ENCODE measurements at regions of chr1 and their contacts with region 1.

Region 1: GRCh38 chr1:66954208-66954607 is 29.4 kb downstream of the MIER1 start:
- DNase-seq: no peak
- H3K4me3 ChIP-seq: no peak overlapping the region
- H3K27ac ChIP-seq: peak overlapping the region; percentile 27
- H3K4me1 ChIP-seq: peaks cover 12% of the 10 kb centered on the region
- H3K27me3 ChIP-seq: no peaks in the 10 kb centered on the region
- CTCF ChIP-seq: no peak
- POLR2A ChIP-seq: no peak

Region 2: DNA sequence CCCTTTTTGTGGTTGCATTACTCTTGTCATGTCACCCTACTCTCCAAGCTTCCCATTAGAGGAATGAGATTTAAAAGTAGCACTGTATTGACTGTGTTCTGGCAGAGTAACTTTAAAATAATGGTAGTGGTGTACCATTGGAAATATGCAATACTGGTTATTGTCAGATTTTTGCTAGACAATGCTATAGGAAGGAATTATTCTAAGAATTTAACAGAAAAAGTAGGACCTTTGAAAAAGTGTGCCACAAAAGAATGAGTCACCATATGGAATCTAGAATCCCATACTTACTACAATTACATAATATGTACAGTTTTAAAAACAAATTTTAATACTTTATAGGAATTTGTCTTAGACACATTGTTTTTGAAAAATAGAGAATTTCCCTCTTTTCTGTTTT is 15.6 kb before region 1 on chr1:
- CTCF ChIA-PET with region 1: interaction called, 5 read pairs
- POLR2A ChIA-PET with region 1: no interaction called
- dilution Hi-C with region 1: no loop called
- intact Hi-C with region 1: loop called (anchors 1 kb)
- DNase-seq: peak; percentile 50
- H3K4me3 ChIP-seq: no peak overlapping the region
- H3K27ac ChIP-seq: no peak overlapping the region
- H3K4me1 ChIP-seq: peaks cover 25% of the 10 kb centered on the region
- H3K27me3 ChIP-seq: no peaks in the 10 kb centered on the region
- CTCF ChIP-seq: no peak
- POLR2A ChIP-seq: no peak

Region 3: DNA sequence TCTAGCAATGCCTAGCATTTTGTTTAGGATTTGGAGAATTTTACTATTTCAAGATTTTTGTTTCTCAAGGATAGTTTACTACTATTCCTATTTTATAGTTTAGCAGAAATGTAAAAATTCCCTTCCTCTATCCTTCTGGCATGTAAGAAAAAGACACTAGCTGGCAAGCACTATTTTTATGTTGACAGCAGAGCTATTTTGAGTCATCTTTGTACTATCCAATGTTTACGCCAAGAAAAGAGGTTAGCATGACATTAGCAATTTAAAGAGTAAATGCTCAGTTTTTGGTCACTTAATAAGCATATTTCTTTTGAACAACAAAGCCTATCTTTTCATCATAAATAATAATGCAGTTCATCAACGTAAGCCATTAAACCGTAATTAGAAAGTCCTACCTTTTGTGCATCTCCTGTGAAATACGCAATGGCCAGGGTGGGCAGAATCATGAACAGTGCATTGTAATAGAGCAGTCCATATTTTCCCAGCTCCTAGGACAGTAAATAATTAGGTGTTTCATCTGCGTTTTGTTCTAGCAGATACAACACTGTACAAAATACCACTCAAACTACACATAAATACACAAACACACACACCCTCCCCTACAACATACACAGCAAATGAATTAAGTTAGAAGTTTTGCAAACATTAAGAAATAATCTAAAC is 87.8 kb after region 1 on chr1:
- CTCF ChIA-PET with region 1: no interaction called
- POLR2A ChIA-PET with region 1: no interaction called
- dilution Hi-C with region 1: no loop called
- intact Hi-C with region 1: no loop called
- DNase-seq: no peak
- H3K4me3 ChIP-seq: no peak overlapping the region
- H3K27ac ChIP-seq: no peak overlapping the region
- H3K4me1 ChIP-seq: no peaks in the 10 kb centered on the region
- H3K27me3 ChIP-seq: no peaks in the 10 kb centered on the region
- CTCF ChIP-seq: no peak
- POLR2A ChIP-seq: no peak

Measured in endothelial cell of umbilical vein (primary cell).